ENCODE measurements at regions of chr9 and their contacts with region 1.

Region 1: GRCh38 chr9:104863180-104863883 is 64.6 kb downstream of the ABCA1 start:
- DNase-seq: peak; percentile 83
- H3K4me3 Mint-ChIP-seq: no peak overlapping the region
- H3K27ac Mint-ChIP-seq: no peak overlapping the region
- H3K4me1 Mint-ChIP-seq: peaks cover 11% of the 10 kb centered on the region
- H3K27me3 Mint-ChIP-seq: no peaks in the 10 kb centered on the region
- CTCF ChIP-seq: peak; percentile 74

Region 2: DNA sequence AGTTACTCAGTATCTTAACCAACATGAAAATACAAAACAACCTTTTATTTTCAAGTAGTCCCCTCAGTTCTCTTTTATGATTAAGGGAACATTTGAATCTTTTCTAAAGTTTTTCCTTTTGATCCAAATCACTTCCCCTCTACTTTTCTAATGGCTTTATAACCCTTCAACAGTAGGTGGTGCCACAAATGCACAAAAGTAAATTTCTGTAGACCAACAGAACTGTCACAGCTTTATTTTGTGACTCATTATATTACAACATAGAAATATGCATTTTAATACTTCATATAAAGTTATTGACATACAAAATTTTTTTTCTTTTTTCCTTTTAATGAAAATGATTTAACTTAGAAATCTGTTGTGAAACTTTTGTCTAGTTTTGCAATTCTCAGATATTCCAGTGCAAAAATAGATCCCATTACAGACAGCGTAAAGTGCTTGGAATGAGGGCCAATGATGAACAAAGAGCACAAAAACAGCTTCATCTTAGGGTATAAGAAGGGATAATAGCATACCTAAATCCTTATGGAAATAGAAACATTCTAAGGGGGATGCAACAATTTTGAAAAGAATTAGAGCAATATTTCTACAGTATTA is 82.4 kb before region 1 on chr9:
- CTCF ChIA-PET with region 1: interaction called, 39 read pairs
- POLR2A ChIA-PET with region 1: interaction called, 3 read pairs
- intact Hi-C with region 1: loop called (anchors 1 kb)
- DNase-seq: peak; percentile 71
- H3K4me3 Mint-ChIP-seq: no peak overlapping the region
- H3K27ac Mint-ChIP-seq: no peak overlapping the region
- H3K4me1 Mint-ChIP-seq: no peaks in the 10 kb centered on the region
- H3K27me3 Mint-ChIP-seq: no peaks in the 10 kb centered on the region
- CTCF ChIP-seq: peak; percentile 45

Region 3: DNA sequence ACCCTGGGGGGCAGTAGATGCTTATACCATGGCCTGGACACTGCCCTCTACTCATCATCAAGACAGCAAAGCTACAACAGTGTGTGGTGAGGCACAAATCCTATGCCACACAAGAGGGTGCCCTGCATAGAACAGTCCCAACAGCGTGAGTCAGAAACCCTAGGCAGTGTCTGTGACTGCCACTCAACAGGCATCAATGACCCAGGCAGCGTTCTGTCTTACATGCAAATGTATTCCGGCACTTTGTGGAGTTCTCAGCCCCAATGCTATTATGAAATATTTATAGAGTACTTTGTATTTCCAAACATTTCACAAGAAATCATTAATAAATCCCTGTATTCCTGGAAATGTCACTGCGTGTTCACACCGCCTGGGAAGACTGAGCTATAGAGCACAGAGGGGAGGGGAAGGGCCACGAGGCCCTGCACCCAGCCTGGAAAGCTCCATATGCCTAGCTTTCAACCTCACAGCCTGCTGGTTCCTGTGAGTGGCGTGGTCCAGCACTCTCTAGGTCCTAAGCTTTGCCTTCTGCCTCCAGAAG is 21.7 kb before region 1 on chr9:
- CTCF ChIA-PET with region 1: interaction called, 11 read pairs
- POLR2A ChIA-PET with region 1: interaction called, 3 read pairs
- intact Hi-C with region 1: no loop called
- DNase-seq: no peak
- H3K4me3 Mint-ChIP-seq: no peak overlapping the region
- H3K27ac Mint-ChIP-seq: no peak overlapping the region
- H3K4me1 Mint-ChIP-seq: no peaks in the 10 kb centered on the region
- H3K27me3 Mint-ChIP-seq: no peaks in the 10 kb centered on the region
- CTCF ChIP-seq: no peak

Region 4: DNA sequence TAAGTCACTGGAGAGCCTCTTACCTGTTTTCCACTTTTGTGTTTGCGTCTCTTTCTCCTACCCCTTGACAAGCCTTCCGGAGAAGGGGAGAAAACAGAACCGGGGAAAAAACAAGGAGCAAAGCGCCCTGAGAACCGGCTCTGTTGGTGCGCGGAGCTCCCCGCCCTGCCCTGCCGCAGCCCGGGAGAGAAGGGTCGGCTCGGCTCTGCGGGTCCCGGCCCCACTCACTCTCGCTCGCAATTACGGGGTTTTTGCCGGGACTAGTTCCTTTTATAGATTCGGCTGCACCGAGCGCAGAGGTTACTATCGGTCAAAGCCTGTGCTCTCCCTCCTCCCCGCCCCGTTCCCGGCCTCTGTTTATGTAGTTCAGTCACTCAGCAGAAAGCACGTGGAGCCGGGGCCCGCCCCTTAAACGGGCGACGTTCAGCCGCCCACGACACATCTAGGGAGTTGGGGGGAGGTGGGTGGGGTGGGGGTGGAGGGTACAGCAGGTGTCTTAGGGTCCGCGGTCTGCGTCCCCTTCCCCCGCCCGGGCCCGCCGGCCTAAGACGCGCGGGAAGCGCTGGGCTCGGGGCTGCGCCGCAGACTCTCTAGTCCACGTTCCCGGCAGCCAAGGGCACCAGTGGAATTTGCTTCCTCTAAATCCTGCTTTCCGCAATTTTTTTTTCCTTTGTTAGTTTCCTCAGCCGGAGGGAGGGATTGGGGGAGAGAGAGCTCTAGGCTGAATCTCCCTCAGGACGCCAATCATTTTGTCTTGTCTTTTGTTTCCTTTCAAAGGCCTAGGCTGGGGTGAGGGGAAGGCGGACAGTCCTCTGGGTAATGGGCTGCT is 64.8 kb after region 1 on chr9 and contains the start of gene ABCA1:
- CTCF ChIA-PET with region 1: interaction called, 7 read pairs
- POLR2A ChIA-PET with region 1: no interaction called
- intact Hi-C with region 1: loop called (anchors 5 kb)
- DNase-seq: peak; percentile 46
- H3K4me3 Mint-ChIP-seq: peak within 1 kb of the TSS; percentile 68
- H3K27ac Mint-ChIP-seq: no peak within 1 kb of the TSS
- H3K4me1 Mint-ChIP-seq: peaks cover 3% of the 10 kb centered on the region
- H3K27me3 Mint-ChIP-seq: no peaks in the 10 kb centered on the region
- CTCF ChIP-seq: no peak
- total RNA-seq, gene ABCA1: 0.15 and 0.28 TPM in 2 replicates

Region 5: GRCh38 chr9:104991144-104991953 is 128.0 kb after region 1 on chr9:
- CTCF ChIA-PET with region 1: interaction called, 11 read pairs
- POLR2A ChIA-PET with region 1: interaction called, 3 read pairs
- intact Hi-C with region 1: loop called (anchors 2 kb)
- DNase-seq: peak; percentile 81
- H3K4me3 Mint-ChIP-seq: peak overlapping the region; percentile 89
- H3K27ac Mint-ChIP-seq: peak overlapping the region; percentile 91
- H3K4me1 Mint-ChIP-seq: peaks cover 24% of the 10 kb centered on the region
- H3K27me3 Mint-ChIP-seq: no peaks in the 10 kb centered on the region
- CTCF ChIP-seq: no peak

Region 6: DNA sequence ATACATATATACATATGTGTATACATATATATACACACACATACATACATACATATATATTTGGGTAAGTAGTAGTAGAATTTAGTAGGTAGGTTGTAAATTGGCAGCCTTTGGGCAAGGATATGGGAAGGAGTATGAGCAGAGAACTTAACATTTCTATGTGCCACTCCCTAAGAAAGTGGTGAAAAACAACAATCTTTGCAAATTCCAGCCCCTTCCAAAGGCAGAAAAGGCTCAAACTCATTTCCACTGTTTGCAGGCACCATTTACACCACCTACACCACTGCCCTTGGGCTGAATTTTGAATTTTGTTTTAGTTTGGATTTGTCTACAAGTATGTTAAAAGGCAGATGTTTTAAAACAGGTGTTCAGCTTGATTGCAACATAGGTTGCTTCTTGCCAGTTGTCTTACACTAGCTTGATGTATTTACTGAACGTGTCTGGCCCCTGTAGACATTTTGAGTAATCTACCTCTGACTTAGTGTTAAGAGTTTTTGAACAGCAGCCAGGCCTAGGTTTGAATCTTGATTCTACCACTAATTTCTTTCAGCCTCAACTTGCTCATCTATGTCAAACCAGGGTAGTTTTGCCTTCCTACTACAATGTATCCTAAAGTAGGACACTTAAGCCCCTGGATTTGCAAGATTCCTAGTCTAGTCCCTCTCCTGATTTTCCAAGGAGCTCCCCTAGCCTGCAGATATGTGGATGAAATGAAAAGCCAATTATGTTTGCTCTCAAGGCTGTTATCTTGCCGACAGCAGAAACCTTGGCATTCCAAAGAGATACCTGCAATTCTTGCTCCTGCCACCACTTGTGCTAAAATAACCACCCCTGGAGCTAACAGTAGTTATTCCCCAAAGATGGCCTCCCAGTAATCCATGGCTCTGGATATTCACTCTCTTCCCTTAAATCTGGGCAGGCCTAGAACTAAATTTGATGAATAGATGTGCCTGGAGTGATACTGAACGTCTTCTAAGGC is 224.9 kb after region 1 on chr9:
- CTCF ChIA-PET with region 1: interaction called, 45 read pairs
- POLR2A ChIA-PET with region 1: interaction called, 3 read pairs
- intact Hi-C with region 1: loop called (anchors 1 kb)
- DNase-seq: peak; percentile 55
- H3K4me3 Mint-ChIP-seq: no peak overlapping the region
- H3K27ac Mint-ChIP-seq: no peak overlapping the region
- H3K4me1 Mint-ChIP-seq: peaks cover 10% of the 10 kb centered on the region
- H3K27me3 Mint-ChIP-seq: no peaks in the 10 kb centered on the region
- CTCF ChIP-seq: no peak

Region 7: DNA sequence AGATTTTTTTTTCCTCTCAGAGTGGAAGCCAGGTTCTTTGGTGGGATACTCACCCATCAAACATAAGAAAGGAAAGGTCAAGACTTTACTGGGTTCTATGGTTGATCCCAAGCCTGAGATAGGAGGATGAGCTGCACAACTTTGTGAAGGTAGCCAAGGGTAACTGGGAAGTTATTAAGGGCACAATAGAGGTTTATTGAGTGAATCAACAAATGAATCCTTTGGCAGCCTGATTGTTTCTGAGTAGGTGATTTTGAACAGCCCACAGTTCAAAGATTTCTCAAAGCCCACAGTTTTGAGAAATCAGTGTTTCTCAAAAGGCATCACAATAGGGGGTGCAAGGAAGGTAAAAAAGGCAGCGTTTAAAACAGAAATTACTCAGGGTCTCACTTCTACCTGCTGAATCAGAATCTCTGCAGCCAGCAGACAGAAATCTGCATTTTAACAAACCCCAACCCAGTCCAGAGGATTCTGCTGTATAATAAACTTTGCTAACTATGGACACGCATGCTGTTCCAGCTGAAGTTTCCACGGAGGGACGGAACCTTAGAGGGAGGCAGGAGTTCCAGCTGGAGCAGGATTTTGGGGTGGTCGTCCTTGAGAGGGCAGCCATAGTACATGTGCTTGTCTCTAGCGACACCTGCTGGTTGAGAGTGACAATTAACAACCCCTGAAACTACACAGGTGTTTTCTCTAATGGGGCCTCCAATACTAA is 551.8 kb after region 1 on chr9:
- CTCF ChIA-PET with region 1: interaction called, 124 read pairs
- POLR2A ChIA-PET with region 1: no interaction called
- intact Hi-C with region 1: loop called (anchors 1 kb)
- DNase-seq: peak; percentile 73
- H3K4me3 Mint-ChIP-seq: no peak overlapping the region
- H3K27ac Mint-ChIP-seq: no peak overlapping the region
- H3K4me1 Mint-ChIP-seq: peaks cover 6% of the 10 kb centered on the region
- H3K27me3 Mint-ChIP-seq: no peaks in the 10 kb centered on the region
- CTCF ChIP-seq: peak; percentile 91

Measured in MCF 10A (cell line).